ENCODE measurements at regions of chr4 and their contacts with region 1.

Region 1: DNA sequence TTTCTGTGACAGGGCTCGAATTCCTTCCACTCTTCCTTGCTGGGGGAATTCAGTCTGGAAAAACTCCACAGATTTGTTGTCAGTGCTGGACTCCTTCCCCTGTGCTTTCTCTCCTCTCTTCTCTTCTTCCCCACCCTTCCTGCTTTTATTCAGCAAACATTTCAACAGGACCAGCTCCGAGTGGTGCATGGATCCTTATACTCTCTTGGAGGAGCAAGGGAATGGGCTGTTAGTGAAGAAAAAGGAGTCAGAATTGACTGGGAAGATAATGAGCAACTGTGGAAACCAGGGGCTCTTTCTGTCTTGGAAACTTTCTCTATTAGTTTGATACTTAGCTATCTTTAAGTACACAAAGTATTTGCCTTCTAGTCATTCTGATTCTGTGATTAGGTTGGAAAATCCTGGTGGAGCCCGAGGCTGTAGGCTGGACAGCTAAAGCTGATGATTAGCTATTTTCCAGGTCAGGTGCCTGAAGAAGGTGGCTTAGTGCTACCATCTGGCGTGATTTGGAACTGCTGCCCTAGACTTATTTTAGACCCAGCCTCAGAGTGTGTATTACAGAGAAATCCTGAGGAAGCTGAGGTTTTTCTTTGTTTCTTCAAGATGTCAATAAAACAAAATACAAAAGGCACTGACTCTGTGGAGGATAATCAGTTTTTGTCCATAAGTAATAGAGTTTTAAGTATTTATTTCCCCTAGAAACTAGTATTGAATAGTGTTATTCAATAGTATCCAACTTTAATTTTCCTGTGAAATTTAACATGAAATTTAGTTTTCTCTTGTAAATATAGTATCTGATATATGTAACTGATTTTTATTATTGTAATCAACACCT is 38.4 kb downstream of the NAP1L5 start:
- DNase-seq: peak; percentile 46
- H3K4me3 Mint-ChIP-seq: no peak overlapping the region
- H3K27ac Mint-ChIP-seq: peak overlapping the region; percentile 64
- H3K4me1 Mint-ChIP-seq: peaks cover 44% of the 10 kb centered on the region
- H3K27me3 Mint-ChIP-seq: no peaks in the 10 kb centered on the region
- CTCF ChIP-seq: peak; percentile 52

Region 2: GRCh38 chr4:88526221-88526815 is 133.0 kb before region 1 on chr4:
- CTCF ChIA-PET with region 1: interaction called, 10 read pairs
- intact Hi-C with region 1: loop called (anchors 1 kb)
- DNase-seq: peak; percentile 2
- H3K4me3 Mint-ChIP-seq: no peak overlapping the region
- H3K27ac Mint-ChIP-seq: no peak overlapping the region
- H3K4me1 Mint-ChIP-seq: peaks cover 9% of the 10 kb centered on the region
- H3K27me3 Mint-ChIP-seq: no peaks in the 10 kb centered on the region
- CTCF ChIP-seq: no peak

Region 3: GRCh38 chr4:88533937-88534750 is 125.1 kb before region 1 on chr4:
- CTCF ChIA-PET with region 1: interaction called, 50 read pairs
- intact Hi-C with region 1: loop called (anchors 1 kb)
- DNase-seq: no peak
- H3K4me3 Mint-ChIP-seq: no peak overlapping the region
- H3K27ac Mint-ChIP-seq: peak overlapping the region; percentile 17
- H3K4me1 Mint-ChIP-seq: peaks cover 8% of the 10 kb centered on the region
- H3K27me3 Mint-ChIP-seq: no peaks in the 10 kb centered on the region
- CTCF ChIP-seq: no peak

Region 4: GRCh38 chr4:88591787-88592599 is 67.3 kb before region 1 on chr4 and contains the start of gene HERC3:
- CTCF ChIA-PET with region 1: interaction called, 10 read pairs
- intact Hi-C with region 1: no loop called
- DNase-seq: peak; percentile 88
- H3K4me3 Mint-ChIP-seq: peak within 1 kb of the TSS; percentile 99
- H3K27ac Mint-ChIP-seq: peak within 1 kb of the TSS; percentile 56
- H3K4me1 Mint-ChIP-seq: no peaks in the 10 kb centered on the region
- H3K27me3 Mint-ChIP-seq: no peaks in the 10 kb centered on the region
- CTCF ChIP-seq: no peak
- total RNA-seq, gene HERC3: 17.3 and 17.8 TPM in 2 replicates

Region 5: DNA sequence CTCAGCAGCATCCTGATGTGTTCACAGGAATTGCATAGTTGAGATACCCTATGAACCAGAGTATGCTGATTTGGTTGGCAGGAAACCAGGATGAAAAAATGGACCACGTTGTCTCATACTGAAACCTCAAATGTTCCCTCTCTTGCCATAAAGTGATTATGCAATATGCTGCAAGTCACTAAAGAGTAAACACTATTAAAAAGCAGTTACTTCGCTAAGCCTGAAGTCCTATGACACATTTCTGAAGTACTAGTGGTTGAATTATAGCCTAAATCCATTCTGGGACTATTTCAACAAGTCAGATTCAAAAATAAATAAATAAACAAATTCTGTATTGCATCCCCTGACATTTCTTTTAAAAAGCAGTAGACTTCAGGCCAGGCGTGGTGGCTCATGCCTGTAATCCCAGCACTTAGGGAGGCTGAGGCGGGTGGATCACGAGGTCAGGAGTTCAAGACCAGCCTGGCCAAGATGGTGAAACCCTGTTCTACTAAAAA is 144.4 kb after region 1 on chr4:
- CTCF ChIA-PET with region 1: no interaction called
- intact Hi-C with region 1: loop called (anchors 5 kb)
- DNase-seq: peak; percentile 22
- H3K4me3 Mint-ChIP-seq: no peak overlapping the region
- H3K27ac Mint-ChIP-seq: no peak overlapping the region
- H3K4me1 Mint-ChIP-seq: peaks cover 40% of the 10 kb centered on the region
- H3K27me3 Mint-ChIP-seq: no peaks in the 10 kb centered on the region
- CTCF ChIP-seq: no peak

Measured in Calu3 (cell line).